ENCODE measurements at regions of chr10 and their contacts with region 1.

Region 1: DNA sequence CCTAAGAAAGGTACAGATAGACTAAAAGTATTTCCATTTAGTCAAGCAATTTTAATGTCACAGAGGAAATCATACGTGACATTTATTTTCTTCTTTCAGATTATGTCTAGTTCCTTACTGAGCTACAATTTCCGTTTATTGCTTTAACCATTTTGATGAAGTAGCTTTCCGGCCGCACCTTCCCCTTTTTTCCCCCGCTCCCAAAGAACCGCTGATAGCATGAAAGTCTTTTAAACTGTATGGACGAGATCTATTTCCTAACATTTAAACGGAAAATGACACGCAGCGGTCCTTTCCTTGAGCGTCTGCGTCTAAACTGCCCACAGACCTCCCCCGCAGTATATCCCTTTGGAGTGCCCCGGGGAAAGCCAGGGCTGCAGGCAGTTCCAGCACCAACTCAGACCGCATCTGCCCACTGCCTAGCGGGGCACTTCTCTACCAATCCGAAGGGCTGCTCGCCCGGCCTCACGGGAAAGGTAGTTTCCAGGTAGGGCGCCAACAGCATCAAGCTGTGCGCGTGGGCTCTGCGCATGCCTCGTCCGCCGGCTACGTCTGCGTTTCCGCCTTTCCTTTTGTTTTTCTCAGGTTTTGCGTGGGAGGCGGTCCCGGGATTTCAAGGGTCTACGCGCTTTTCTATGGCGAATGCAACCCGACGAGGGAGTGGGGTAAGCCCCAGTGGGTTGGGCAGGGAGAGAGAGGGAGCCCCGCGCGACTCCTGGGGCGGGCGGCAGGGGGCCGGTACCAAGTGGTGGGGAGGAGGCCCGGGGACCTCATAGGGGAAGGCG is at the start of gene ZNF33A:
- DNase-seq: peak; percentile 96
- H3K4me3 ChIP-seq: peak within 1 kb of the TSS; percentile 77 to 85 (median 81)
- H3K27ac ChIP-seq: peak within 1 kb of the TSS; percentile 98 to 99 (median 99)
- H3K4me1 ChIP-seq: peaks cover 0 to 10% (median 9%) of the 10 kb centered on the region in 4 donors
- H3K27me3 ChIP-seq: no peaks in the 10 kb centered on the region
- CTCF ChIP-seq: no peak
- EP300 ChIP-seq: peak in 1 of 4 donors; percentile 25
- POLR2A ChIP-seq: peak; percentile 35 to 40
- total RNA-seq, gene ZNF33A: 30.9 to 35.5 (median 33.4) TPM

Region 2: GRCh38 chr10:37654456-37654855 is 355.9 kb before region 1 on chr10:
- intact Hi-C with region 1: no loop called
- DNase-seq: no peak
- H3K4me3 ChIP-seq: no peak overlapping the region
- H3K27ac ChIP-seq: no peak overlapping the region
- H3K4me1 ChIP-seq: no peaks in the 10 kb centered on the region
- H3K27me3 ChIP-seq: no peaks in the 10 kb centered on the region
- CTCF ChIP-seq: no peak
- EP300 ChIP-seq: no peak
- POLR2A ChIP-seq: no peak

Region 3: GRCh38 chr10:37857287-37858211 is 152.8 kb before region 1 on chr10 and contains the start of gene ZNF248:
- intact Hi-C with region 1: loop called (anchors 1 kb)
- DNase-seq: peak; percentile 99
- H3K4me3 ChIP-seq: peak within 1 kb of the TSS; percentile 73 to 97 (median 91)
- H3K27ac ChIP-seq: peak within 1 kb of the TSS; percentile 99 to 100 (median 100)
- H3K4me1 ChIP-seq: peaks cover 0 to 64% (median 53%) of the 10 kb centered on the region in 4 donors
- H3K27me3 ChIP-seq: no peaks in the 10 kb centered on the region
- CTCF ChIP-seq: no peak
- EP300 ChIP-seq: peak; percentile 20 to 96 (median 71)
- POLR2A ChIP-seq: peak; percentile 96 to 98
- total RNA-seq, gene ZNF248: 40.2 to 46.4 (median 43.4) TPM

Region 4: GRCh38 chr10:37976091-37976879 is 34.0 kb before region 1 on chr10 and contains the start of gene ZNF25:
- intact Hi-C with region 1: loop called (anchors 1 kb)
- DNase-seq: peak; percentile 99
- H3K4me3 ChIP-seq: peak within 1 kb of the TSS; percentile 80 to 99 (median 88)
- H3K27ac ChIP-seq: peak within 1 kb of the TSS; percentile 99 to 100 (median 100)
- H3K4me1 ChIP-seq: peaks cover 0 to 20% (median 11%) of the 10 kb centered on the region in 4 donors
- H3K27me3 ChIP-seq: no peaks in the 10 kb centered on the region
- CTCF ChIP-seq: peak; percentile 80 to 96 (median 86)
- EP300 ChIP-seq: no peak
- POLR2A ChIP-seq: peak; percentile 81 to 83
- total RNA-seq, gene ZNF25: 20.5 to 35.7 (median 27.9) TPM

Region 5: GRCh38 chr10:38094158-38094920 is 84.0 kb after region 1 on chr10 and contains the start of gene ZNF37A:
- intact Hi-C with region 1: loop called (anchors 1 kb)
- DNase-seq: peak; percentile 96
- H3K4me3 ChIP-seq: peak within 1 kb of the TSS; percentile 70 to 86 (median 76)
- H3K27ac ChIP-seq: peak within 1 kb of the TSS; percentile 88 to 92 (median 90)
- H3K4me1 ChIP-seq: peaks cover 0 to 20% (median 11%) of the 10 kb centered on the region in 4 donors
- H3K27me3 ChIP-seq: no peaks in the 10 kb centered on the region
- CTCF ChIP-seq: no peak
- EP300 ChIP-seq: no peak
- POLR2A ChIP-seq: peak in 1 of 2 donors; percentile 39
- total RNA-seq, gene ZNF37A: 19.3 to 37.1 (median 23.7) TPM